GM10248 (cell line): ENCODE measurements at regions of chr18 and their contacts with region 1.

Region 1: DNA sequence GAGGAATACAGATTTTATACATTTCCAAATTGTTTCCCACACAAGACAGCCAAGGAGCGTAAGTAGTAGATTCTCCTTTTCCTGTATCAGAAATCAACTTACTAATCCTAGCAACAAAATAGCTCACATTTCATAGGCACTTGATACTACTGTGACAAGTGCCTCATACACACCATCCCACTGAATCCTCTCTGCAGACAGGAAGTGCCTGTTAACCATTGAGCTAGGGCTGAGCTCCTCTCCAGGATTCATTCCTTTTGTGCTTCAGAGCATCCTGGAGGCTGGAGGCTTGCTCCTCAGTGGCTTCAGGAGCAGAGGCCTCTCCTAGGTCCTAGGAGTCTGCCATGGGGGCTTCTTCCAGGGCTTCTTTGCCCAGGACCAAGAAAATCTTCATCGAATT is 20.8 kb upstream of the ZNF396 start:
- DNase-seq: no peak
- CTCF ChIP-seq: no peak

Region 2: GRCh38 chr18:35155398-35156117 is 242.4 kb before region 1 on chr18:
- CTCF ChIA-PET with region 1: no interaction called
- POLR2A ChIA-PET with region 1: no interaction called
- DNase-seq: no peak
- CTCF ChIP-seq: no peak

Region 3: DNA sequence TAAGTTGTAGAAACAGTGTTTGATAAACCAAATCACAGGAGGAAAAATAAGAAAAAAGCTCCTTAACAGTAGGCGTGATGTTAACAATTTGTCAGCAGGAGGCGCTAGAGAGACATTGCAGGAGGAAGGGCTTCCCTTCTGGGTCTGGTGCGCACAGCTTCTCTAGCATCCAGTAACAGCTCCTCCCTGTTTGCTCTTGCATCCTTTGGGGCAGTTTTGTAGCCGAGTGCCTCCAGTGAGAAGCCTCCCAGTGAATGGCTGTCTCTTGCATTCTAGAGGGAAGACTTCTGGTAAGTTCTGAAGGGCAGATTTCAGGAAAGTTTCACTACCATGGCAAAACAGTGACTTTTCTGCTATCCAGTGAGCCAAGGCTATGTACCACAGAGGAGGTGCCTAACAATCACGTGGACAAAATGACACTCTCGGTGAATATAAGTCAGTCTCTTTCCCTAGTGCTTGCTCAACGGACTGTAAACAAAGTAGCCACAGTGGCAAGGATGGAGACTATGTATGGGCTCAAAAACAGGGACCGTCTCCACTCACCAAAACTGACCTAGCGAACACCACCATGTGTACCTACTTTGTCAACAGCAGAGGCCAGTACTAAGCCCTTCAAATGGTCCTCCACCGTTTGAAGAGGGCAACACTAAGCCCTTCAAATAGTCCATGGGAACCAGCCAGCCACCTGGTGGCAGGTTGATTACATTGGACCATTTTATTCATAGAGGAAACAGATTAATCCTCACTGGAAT is 11.2 kb before region 1 on chr18:
- CTCF ChIA-PET with region 1: interaction called, 38 read pairs
- POLR2A ChIA-PET with region 1: no interaction called
- DNase-seq: peak; percentile 70
- CTCF ChIP-seq: peak; percentile 83

Region 4: GRCh38 chr18:35407871-35408481 is 10.0 kb after region 1 on chr18:
- CTCF ChIA-PET with region 1: interaction called, 13 read pairs
- POLR2A ChIA-PET with region 1: no interaction called
- DNase-seq: peak; percentile 68
- CTCF ChIP-seq: peak; percentile 61